Naive thymus-derived CD4-positive, alpha-beta T cell (primary cell): ENCODE measurements at regions of chr12 and their contacts with region 1.

Region 1: DNA sequence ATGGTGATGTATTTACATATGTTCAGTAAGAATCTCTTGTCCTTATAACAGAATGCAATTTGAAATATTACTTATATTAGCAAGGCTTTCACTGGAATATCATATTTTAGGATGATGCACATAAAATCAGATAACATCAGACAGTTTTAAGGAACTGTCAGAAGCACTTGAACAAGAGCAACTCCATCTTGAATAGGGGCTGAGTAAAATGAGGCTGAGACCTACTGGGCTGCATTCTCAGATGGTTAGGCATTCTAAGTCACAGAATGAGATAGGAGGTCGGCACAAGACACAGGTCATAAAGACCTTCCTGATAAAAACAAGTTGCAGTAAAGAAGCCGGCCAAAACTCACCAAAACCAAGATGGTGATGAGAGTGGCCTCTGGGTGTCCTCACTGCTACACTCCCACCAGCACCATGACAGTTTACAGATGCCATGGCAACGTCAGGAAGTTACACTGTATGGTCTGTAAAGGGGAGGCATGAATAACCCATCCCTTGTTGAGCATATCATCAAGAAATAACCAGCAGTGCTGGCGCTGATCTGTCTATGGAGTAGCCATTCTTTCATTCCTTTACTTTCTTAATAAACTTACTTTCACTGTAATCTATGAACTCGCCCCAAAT is 27.6 kb upstream of the ETV6 start:
- DNase-seq: peak in 6 of 9 donors; percentile 8 to 43 (median 28)
- ATAC-seq: no peak
- H3K4me3 ChIP-seq: no peak overlapping the region
- H3K4me3 Mint-ChIP-seq: no peak overlapping the region
- H3K27ac ChIP-seq: no peak overlapping the region
- H3K27ac Mint-ChIP-seq: peak overlapping the region in 1 of 9 donors; percentile 26
- H3K4me1 ChIP-seq: no peaks in the 10 kb centered on the region
- H3K4me1 Mint-ChIP-seq: peaks cover 0 to 10% (median 0%) of the 10 kb centered on the region in 7 donors
- H3K27me3 ChIP-seq: no peaks in the 10 kb centered on the region
- H3K27me3 Mint-ChIP-seq: no peaks in the 10 kb centered on the region

Region 2: GRCh38 chr12:11553871-11554533 is 67.9 kb before region 1 on chr12:
- CTCF ChIA-PET with region 1: no interaction called
- POLR2A ChIA-PET with region 1: no interaction called
- intact Hi-C with region 1: no loop called
- DNase-seq: peak in 7 of 9 donors; percentile 41 to 66 (median 58)
- ATAC-seq: peak; percentile 81
- H3K4me3 ChIP-seq: no peak overlapping the region
- H3K4me3 Mint-ChIP-seq: peak overlapping the region in 8 of 10 donors; percentile 12 to 71 (median 36)
- H3K27ac ChIP-seq: no peak overlapping the region
- H3K27ac Mint-ChIP-seq: peak overlapping the region in 8 of 9 donors; percentile 38 to 94 (median 58)
- H3K4me1 ChIP-seq: peaks cover 0 to 15% of the 10 kb centered on the region in 2 donors
- H3K4me1 Mint-ChIP-seq: peaks cover 11 to 47% (median 32%) of the 10 kb centered on the region in 7 donors
- H3K27me3 ChIP-seq: no peaks in the 10 kb centered on the region
- H3K27me3 Mint-ChIP-seq: peaks cover 0 to 26% (median 0%) of the 10 kb centered on the region in 5 donors

Region 3: DNA sequence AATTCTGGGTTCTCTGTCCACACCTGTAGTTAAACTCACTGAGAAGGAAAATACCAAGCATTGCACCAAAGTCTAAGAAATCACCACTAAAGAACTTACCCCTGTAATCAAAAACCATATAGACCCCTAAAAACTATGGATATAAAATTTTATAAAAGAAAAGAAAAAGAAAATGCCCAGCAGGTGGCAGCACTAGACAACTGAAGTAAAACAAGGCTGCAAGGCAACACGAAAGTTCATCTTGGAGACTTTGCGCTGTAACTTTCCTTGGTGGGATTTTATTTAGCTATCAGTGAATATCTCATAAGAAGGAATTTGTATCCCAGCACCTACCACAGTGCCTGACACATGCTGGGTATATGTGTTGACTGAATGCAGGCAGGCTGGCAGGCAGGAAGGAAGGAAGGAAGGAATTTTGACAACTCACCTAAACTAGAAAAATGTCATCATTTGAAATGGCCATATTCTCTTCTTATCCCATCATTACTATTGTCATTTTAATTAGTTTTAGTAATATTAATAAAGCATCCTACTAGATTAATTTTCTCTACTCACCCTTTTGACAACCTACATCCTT is 40.6 kb before region 1 on chr12:
- CTCF ChIA-PET with region 1: interaction called, 5 read pairs
- POLR2A ChIA-PET with region 1: interaction called, 3 read pairs
- intact Hi-C with region 1: loop called in 1 of 2 experiments (anchors 1 kb)
- DNase-seq: peak; percentile 22 to 73 (median 64)
- ATAC-seq: peak; percentile 60
- H3K4me3 ChIP-seq: no peak overlapping the region
- H3K4me3 Mint-ChIP-seq: peak overlapping the region in 1 of 10 donors; percentile 65
- H3K27ac ChIP-seq: no peak overlapping the region
- H3K27ac Mint-ChIP-seq: peak overlapping the region in 2 of 9 donors; percentile 28 to 88
- H3K4me1 ChIP-seq: no peaks in the 10 kb centered on the region
- H3K4me1 Mint-ChIP-seq: peaks cover 0 to 10% (median 4%) of the 10 kb centered on the region in 7 donors
- H3K27me3 ChIP-seq: no peaks in the 10 kb centered on the region
- H3K27me3 Mint-ChIP-seq: peaks cover 0 to 14% (median 0%) of the 10 kb centered on the region in 5 donors